SK-N-SH (cell line): ENCODE measurements at regions of chr2 and their contacts with region 1.

Region 1: GRCh38 chr2:47272031-47272864 is 117.1 kb upstream of the STPG4 start:
- DNase-seq: peak; percentile 98
- H3K4me3 ChIP-seq: peak overlapping the region in 1 of 2 experiments; percentile 35; a peak in 3 of 4 replicates
- H3K27ac ChIP-seq: peak overlapping the region; percentile 44 to 84; a peak in 3 of 4 replicates
- H3K4me1 ChIP-seq: peaks cover 16 to 30% of the 10 kb centered on the region in 2 experiments; a peak in 3 of 4 replicates
- H3K27me3 ChIP-seq: no peaks in the 10 kb centered on the region
- CTCF ChIP-seq: peak; percentile 99
- EP300 ChIP-seq: no peak; a peak in 1 of 4 replicates
- RAD21 ChIP-seq: peak; percentile 89

Region 2: DNA sequence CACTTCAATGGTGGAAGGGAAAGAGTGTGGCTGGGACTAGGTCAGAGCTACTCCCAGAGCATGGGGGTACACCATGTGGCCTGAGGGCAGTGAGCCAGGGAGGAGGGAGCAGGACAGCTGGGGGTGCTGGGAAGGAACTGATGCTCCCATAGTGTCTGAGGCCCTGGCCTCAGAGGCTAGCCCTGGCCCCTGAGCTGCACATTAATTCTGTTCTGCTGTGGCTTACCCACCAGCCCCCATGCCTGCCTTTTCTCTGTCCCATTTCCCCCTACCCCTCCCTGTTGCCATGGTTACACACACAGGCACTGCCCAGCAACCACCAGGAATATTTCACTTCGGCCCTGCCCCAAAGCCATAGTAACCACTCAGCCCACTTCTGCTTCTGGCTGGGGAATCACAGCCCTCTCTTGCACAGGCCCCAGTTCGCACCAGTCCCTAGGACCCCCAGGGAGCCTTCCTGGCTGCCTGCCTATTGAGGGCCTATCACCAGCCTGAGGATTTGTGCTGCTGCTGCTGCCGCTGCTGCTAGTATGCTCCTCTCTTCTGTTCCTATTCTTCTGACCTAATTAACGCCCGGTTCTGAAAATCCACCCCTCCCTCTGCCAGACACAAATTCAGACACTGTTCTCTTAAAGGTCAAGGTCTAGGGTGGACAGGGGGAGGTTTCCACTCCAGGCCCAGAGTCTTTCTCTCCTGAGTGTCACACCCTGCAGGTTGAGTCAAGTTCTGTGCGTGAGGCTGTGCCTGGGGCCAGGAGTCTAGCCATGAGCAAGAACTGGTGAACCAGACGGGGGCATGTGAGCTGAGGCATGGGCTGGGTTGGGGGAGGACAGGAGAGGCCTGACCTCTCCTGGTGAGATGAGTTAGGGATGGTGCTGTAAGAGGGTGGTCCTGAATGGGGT is 269.5 kb before region 1 on chr2:
- CTCF ChIA-PET with region 1: interaction called, 12 read pairs
- POLR2A ChIA-PET with region 1: no interaction called
- DNase-seq: peak; percentile 90
- H3K4me3 ChIP-seq: no peak overlapping the region
- H3K27ac ChIP-seq: peak overlapping the region; percentile 37 to 99; a peak in 3 of 4 replicates
- H3K4me1 ChIP-seq: peaks cover 9 to 87% of the 10 kb centered on the region in 2 experiments
- H3K27me3 ChIP-seq: no peaks in the 10 kb centered on the region
- CTCF ChIP-seq: no peak
- EP300 ChIP-seq: peak in 1 of 2 experiments; percentile 27; a peak in 1 of 4 replicates
- RAD21 ChIP-seq: no peak

Region 3: GRCh38 chr2:47162780-47163179 is 109.5 kb before region 1 on chr2:
- CTCF ChIA-PET with region 1: interaction called, 11 read pairs
- POLR2A ChIA-PET with region 1: no interaction called
- DNase-seq: no peak
- H3K4me3 ChIP-seq: no peak overlapping the region
- H3K27ac ChIP-seq: peak overlapping the region; percentile 35 to 47; a peak in 2 of 4 replicates
- H3K4me1 ChIP-seq: peaks cover 12 to 18% of the 10 kb centered on the region in 2 experiments; a peak in 3 of 4 replicates
- H3K27me3 ChIP-seq: no peaks in the 10 kb centered on the region
- CTCF ChIP-seq: no peak
- EP300 ChIP-seq: no peak
- RAD21 ChIP-seq: no peak

Region 4: GRCh38 chr2:47195149-47195548 is 77.1 kb before region 1 on chr2:
- CTCF ChIA-PET with region 1: interaction called, 11 read pairs
- POLR2A ChIA-PET with region 1: no interaction called
- DNase-seq: no peak
- H3K4me3 ChIP-seq: no peak overlapping the region
- H3K27ac ChIP-seq: no peak overlapping the region
- H3K4me1 ChIP-seq: peaks cover 49 to 52% of the 10 kb centered on the region in 2 experiments
- H3K27me3 ChIP-seq: no peaks in the 10 kb centered on the region
- CTCF ChIP-seq: peak; percentile 27; the same call in 1 of the 2 replicates
- EP300 ChIP-seq: no peak
- RAD21 ChIP-seq: peak; percentile 34

Region 5: GRCh38 chr2:47237822-47238385 is 34.3 kb before region 1 on chr2:
- CTCF ChIA-PET with region 1: interaction called, 14 read pairs
- POLR2A ChIA-PET with region 1: interaction called, 6 read pairs
- DNase-seq: no peak
- H3K4me3 ChIP-seq: no peak overlapping the region
- H3K27ac ChIP-seq: peak overlapping the region in 1 of 2 experiments; percentile 96; a peak in 2 of 4 replicates
- H3K4me1 ChIP-seq: peaks cover 17 to 48% of the 10 kb centered on the region in 2 experiments
- H3K27me3 ChIP-seq: no peaks in the 10 kb centered on the region
- CTCF ChIP-seq: no peak
- EP300 ChIP-seq: no peak
- RAD21 ChIP-seq: no peak

Region 6: DNA sequence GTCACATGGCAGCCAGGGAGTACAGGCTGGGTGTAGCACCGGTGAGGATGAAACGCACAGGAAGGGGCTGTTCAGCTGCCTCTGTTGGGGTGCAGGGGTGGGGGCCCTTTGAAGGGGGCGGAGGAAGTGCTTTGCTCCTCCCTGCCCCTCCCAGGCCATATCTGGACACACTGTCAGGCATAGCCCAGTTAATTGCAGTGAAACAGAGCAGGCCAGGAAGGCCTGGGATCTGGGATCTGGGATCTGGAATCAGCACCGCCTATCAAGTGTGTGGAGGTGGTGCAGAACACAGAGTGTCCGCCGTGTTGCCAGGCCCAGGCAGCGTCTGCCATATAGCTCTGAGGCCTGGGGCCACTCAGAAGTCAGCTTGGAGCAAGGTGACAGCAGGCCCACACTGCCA is 11.4 kb after region 1 on chr2:
- CTCF ChIA-PET with region 1: interaction called, 31 read pairs
- POLR2A ChIA-PET with region 1: no interaction called
- DNase-seq: no peak
- H3K4me3 ChIP-seq: no peak overlapping the region
- H3K27ac ChIP-seq: peak overlapping the region in 1 of 2 experiments; percentile 80; a peak in 2 of 4 replicates
- H3K4me1 ChIP-seq: peaks cover 9 to 10% of the 10 kb centered on the region in 2 experiments; a peak in 2 of 4 replicates
- H3K27me3 ChIP-seq: no peaks in the 10 kb centered on the region
- CTCF ChIP-seq: no peak
- EP300 ChIP-seq: peak in 1 of 2 experiments; percentile 89; a peak in 2 of 4 replicates
- RAD21 ChIP-seq: no peak; the same call in 1 of the 2 replicates

Region 7: GRCh38 chr2:47300609-47301276 is 28.5 kb after region 1 on chr2:
- CTCF ChIA-PET with region 1: interaction called, 10 read pairs
- POLR2A ChIA-PET with region 1: no interaction called
- DNase-seq: no peak
- H3K4me3 ChIP-seq: no peak overlapping the region
- H3K27ac ChIP-seq: no peak overlapping the region
- H3K4me1 ChIP-seq: peaks cover 2 to 5% of the 10 kb centered on the region in 2 experiments; a peak in 3 of 4 replicates
- H3K27me3 ChIP-seq: no peaks in the 10 kb centered on the region
- CTCF ChIP-seq: no peak
- EP300 ChIP-seq: no peak
- RAD21 ChIP-seq: no peak

Region 8: GRCh38 chr2:47503481-47504070 is 231.3 kb after region 1 on chr2:
- CTCF ChIA-PET with region 1: no interaction called
- POLR2A ChIA-PET with region 1: no interaction called
- DNase-seq: no peak
- H3K4me3 ChIP-seq: no peak overlapping the region
- H3K27ac ChIP-seq: no peak overlapping the region
- H3K4me1 ChIP-seq: peaks cover 0 to 10% of the 10 kb centered on the region in 2 experiments; a peak in 1 of 4 replicates
- H3K27me3 ChIP-seq: 0 out of 2 replicates have a peak, but pooled peaks cover 3% of the 10 kb centered on the region
- CTCF ChIP-seq: no peak
- EP300 ChIP-seq: no peak
- RAD21 ChIP-seq: no peak